Activated naive CD4-positive, alpha-beta T cell treated with anti-CD3 and anti-CD28 coated beads for 36 hours (primary cell): ENCODE measurements at regions of chr6 and their contacts with region 1.

Region 1: GRCh38 chr6:99613409-99613704 is 6.7 kb downstream of the PRDM13 start:
- DNase-seq: peak; percentile 35
- H3K4me3 Mint-ChIP-seq: peak overlapping the region; percentile 34
- H3K27ac Mint-ChIP-seq: no peak overlapping the region
- H3K4me1 Mint-ChIP-seq: peaks cover 30% of the 10 kb centered on the region
- H3K27me3 Mint-ChIP-seq: peaks cover 70% of the 10 kb centered on the region

Region 2: GRCh38 chr6:99119109-99120031 is 494.0 kb before region 1 on chr6:
- CTCF ChIA-PET with region 1: no interaction called
- intact Hi-C with region 1: no loop called
- DNase-seq: peak; percentile 48
- H3K4me3 Mint-ChIP-seq: no peak overlapping the region
- H3K27ac Mint-ChIP-seq: no peak overlapping the region
- H3K4me1 Mint-ChIP-seq: no peaks in the 10 kb centered on the region
- H3K27me3 Mint-ChIP-seq: peaks cover 26% of the 10 kb centered on the region

Region 3: DNA sequence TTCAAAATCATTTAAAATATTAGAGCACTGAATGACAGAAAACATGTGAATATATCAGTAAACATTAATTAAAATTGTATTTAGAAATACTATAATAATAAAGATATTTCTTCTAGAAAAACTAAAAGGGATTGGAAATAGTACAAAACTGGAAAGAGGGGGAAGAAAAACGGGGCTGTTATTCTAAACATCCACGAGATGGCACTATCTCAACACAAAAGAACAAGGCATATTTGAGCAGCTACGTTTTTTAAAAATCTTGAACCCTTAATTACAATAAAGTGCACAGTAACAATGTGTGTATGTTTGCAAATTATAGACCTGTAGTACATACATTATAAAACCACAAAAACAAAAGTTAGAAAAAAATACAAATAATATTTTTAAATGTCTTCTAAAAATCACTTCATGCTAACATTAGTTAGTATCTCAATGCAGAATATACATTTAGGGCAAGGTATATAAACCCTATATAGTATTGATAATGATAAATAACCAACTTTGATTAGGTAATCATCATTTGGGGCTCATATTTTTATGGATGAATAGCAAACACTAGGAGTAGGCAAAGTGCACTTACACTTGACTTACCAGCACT is 145.7 kb before region 1 on chr6:
- CTCF ChIA-PET with region 1: no interaction called
- intact Hi-C with region 1: loop called (anchors 2 kb)
- DNase-seq: no peak
- H3K4me3 Mint-ChIP-seq: no peak overlapping the region
- H3K27ac Mint-ChIP-seq: no peak overlapping the region
- H3K4me1 Mint-ChIP-seq: no peaks in the 10 kb centered on the region
- H3K27me3 Mint-ChIP-seq: no peaks in the 10 kb centered on the region

Region 4: GRCh38 chr6:99520855-99521632 is 92.3 kb before region 1 on chr6:
- CTCF ChIA-PET with region 1: no interaction called
- intact Hi-C with region 1: loop called (anchors 2 kb)
- DNase-seq: peak; percentile 80
- H3K4me3 Mint-ChIP-seq: peak overlapping the region; percentile 96
- H3K27ac Mint-ChIP-seq: peak overlapping the region; percentile 84
- H3K4me1 Mint-ChIP-seq: peaks cover 12% of the 10 kb centered on the region
- H3K27me3 Mint-ChIP-seq: peaks cover 3% of the 10 kb centered on the region

Region 5: DNA sequence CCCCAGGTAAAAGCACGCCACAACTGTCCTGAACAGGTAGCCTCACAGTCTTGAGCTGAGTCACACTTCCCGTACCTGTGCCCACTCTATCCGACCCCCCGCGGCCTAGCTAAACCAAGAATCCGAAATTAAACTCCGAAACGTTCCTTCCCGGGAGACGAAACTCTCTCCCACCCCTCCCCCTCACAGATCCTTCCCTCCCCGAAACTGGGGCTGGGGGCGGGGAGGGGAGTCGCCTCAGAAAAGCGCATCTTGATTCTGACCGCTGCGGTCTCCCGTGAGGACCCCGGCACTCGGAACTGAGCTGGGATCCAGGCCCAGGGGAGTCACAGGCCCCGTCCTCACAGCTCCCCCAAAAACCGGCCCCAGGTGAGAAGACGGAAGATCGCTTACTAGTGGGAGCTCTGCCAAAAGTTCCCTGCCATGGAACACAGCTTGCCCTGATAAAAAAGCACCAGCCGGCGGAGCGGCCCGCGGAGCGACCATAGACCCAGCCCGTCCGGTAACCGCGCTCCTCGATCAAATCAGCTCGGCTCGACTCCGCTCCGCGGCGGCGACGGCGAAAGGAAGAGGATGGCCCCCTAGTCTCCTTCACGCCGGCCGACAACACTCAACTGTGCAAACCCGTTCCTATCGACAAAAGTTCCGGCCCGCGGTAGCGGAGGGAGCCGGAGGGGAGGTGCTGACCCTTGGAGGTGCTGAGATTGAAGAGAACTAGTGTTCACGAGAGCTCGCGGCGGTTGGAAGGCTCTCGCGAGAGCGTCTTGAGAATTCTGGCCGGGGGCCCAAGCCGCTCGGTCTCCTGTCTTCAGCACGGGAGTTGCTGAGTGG is 45.0 kb before region 1 on chr6 and contains the start of gene CCNC:
- CTCF ChIA-PET with region 1: interaction called, 3 read pairs
- intact Hi-C with region 1: loop called (anchors 2 kb)
- DNase-seq: peak; percentile 93
- H3K4me3 Mint-ChIP-seq: peak within 1 kb of the TSS; percentile 92
- H3K27ac Mint-ChIP-seq: peak within 1 kb of the TSS; percentile 92
- H3K4me1 Mint-ChIP-seq: peaks cover 28% of the 10 kb centered on the region
- H3K27me3 Mint-ChIP-seq: no peaks in the 10 kb centered on the region
- total RNA-seq, gene CCNC: 51.6 to 51.8 TPM

Region 6: DNA sequence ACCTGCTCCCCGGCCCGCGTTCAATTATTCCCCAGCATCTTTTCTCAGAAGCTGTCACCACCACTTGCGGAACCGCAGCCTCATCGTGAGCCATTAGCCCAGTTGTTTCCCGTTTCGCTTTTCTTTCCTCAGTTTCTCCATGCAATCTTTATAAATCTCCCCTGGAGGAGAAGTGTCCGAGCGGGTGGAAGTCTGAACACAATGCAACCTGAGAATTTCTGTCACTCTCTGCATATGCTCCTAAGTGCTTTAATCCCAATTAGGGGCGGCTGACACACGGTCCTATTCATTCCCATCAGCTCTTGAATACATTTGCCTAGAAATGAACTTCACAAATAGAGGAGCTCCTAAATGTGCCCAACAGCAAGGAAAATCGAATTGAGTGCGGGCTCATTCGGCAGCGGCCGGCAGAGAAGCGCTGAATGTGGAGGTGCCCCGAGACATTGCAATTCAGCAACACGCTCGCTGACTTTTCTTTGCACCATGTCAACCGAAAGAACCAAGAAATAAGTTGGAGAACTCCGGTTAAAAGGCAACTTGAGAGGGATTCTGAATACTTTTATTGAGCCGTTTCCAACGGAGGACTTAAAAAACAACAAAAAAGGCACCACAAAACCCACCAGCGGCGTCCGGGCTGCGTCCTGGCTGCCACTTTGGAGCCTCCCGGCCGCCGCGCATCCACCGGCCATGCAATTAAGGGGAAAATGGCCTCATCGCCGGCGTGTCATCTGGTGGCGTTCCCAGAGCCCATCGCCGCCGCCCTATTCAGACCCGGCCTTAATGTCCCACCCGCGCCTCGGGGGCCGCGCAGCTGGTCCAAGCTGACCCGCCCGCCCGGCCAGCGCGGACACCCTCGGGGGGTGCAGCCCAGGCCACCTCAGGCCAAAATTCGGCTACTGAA is 10.6 kb before region 1 on chr6:
- CTCF ChIA-PET with region 1: interaction called, 3 read pairs
- intact Hi-C with region 1: loop called (anchors 1 kb)
- DNase-seq: no peak
- H3K4me3 Mint-ChIP-seq: peak overlapping the region; percentile 40
- H3K27ac Mint-ChIP-seq: no peak overlapping the region
- H3K4me1 Mint-ChIP-seq: peaks cover 27% of the 10 kb centered on the region
- H3K27me3 Mint-ChIP-seq: peaks cover 76% of the 10 kb centered on the region

Region 7: DNA sequence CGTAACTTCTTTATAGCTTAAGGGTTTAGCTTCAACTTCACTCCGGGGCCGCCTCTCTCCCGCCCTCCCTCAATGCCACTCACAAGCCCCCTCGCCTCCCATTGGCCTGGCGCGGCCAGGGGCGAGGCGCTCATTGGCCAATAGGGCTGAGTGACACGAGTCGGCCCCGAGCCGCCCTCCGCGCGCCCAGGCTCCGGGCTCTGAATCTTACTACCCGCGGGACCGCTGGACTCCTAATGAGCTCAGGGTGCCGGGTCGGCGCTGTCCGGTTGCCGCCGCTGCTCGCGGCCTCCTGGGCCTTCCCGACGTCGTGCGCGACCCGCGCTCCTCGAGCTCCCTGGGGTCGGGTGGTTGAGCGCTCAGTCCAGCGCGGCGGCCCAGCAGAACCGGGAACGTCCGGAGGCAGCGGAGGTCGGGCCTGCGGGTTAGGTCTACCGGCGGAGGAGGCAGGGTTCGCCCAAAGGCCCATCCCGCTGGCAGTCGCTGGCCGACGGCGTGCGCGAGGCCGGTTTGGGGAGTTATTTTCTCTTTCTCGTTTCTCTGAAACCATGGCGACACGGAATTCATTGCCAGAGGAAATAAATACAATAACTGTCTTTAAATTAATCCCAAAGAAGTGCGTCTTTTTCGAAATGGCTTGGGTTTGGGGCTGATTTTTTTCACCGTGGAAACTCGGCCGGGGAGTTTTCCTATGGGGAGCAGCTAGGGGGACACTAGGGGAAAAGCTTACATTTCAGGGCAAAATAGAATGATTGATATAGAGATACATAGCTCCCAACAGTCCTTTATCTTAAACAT is 851.7 kb after region 1 on chr6 and contains the start of gene SIM1:
- CTCF ChIA-PET with region 1: no interaction called
- intact Hi-C with region 1: loop called (anchors 2 kb)
- DNase-seq: no peak
- H3K4me3 Mint-ChIP-seq: peak within 1 kb of the TSS; percentile 18
- H3K27ac Mint-ChIP-seq: no peak within 1 kb of the TSS
- H3K4me1 Mint-ChIP-seq: peaks cover 34% of the 10 kb centered on the region
- H3K27me3 Mint-ChIP-seq: peaks cover 83% of the 10 kb centered on the region
- total RNA-seq, gene SIM1: not detected